ENCODE measurements at regions of chr12 and their contacts with region 1.

Region 1: DNA sequence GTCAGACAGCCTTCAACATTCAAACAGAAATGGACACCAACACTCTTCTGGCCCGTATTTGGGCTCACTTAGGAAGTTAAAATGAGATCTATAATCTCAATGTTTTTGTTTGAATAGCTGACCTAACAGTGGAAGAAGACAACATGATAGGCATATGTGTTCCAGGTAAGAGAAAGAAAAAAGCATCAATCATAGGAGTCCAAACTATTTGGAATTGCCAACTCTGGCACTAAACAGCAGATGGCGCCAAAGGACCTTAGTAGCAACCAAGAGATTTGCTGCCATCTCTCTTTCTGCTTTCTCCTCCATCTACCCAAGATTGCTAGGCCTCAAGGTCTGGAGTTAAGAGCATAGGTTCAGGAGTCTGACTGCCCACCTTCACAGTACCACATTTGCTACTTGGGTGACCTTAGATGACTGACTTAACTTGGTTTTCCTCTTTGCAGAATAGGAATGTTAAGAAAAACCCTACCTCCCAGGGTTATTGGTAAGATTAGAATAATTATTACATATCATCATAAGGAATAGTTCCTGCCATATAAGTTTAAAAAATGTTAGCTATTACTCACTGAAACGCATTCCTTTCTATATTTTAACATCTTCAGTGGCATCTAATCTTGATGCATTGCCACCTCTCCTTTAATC is 30.2 kb downstream of the PEX5 start:
- DNase-seq: peak; percentile 81
- ATAC-seq: no peak
- H3K4me3 Mint-ChIP-seq: no peak overlapping the region
- H3K27ac Mint-ChIP-seq: no peak overlapping the region
- H3K4me1 Mint-ChIP-seq: no peaks in the 10 kb centered on the region
- H3K27me3 Mint-ChIP-seq: no peaks in the 10 kb centered on the region

Region 2: GRCh38 chr12:7303230-7303629 is 83.5 kb after region 1 on chr12:
- CTCF ChIA-PET with region 1: no interaction called
- DNase-seq: no peak
- ATAC-seq: no peak
- H3K4me3 Mint-ChIP-seq: no peak overlapping the region
- H3K27ac Mint-ChIP-seq: no peak overlapping the region
- H3K4me1 Mint-ChIP-seq: no peaks in the 10 kb centered on the region
- H3K27me3 Mint-ChIP-seq: peaks cover 11% of the 10 kb centered on the region

Region 3: DNA sequence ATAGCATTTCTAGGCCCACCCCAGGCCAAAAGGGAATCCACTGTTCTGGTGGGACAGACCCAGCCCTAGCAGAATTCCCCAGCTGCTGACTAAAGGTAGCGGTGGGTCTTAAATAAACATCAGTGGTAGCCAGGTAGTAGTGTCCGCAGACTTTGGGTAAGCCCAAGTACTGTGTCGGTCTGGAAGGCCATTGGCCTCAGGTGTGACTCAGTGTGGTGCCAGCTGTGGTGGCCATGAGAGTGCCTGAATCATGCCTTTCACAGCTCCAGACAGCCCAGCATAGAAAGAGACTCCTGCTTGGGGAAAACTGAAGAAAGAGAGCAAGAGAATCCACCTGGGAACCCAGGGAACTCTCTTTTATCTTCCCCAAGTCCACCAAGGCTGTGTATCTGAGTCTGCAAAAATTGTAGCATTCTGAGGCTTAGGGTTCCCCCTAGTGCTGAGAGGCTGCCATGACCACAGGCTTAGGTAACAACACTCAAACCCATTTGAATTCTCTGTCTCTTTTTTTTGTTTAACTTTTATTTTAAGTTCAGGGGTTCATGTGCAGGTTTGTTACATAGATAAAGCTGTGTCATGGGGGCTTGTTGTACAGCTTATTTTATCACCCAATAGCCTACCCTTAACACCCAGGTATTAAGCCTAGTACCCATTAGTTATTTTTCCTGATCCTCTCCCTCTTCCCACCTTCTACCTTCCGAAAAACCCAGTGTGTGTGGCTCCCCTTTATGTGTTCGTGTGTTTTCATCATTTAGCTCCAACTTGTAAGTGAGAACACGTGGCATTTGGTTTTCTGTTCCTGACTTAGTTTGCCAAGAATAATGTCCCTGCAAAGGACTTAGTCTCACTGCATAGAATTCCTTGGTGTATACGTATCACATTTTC is 240.9 kb after region 1 on chr12:
- CTCF ChIA-PET with region 1: interaction called, 12 read pairs
- DNase-seq: peak; percentile 69
- ATAC-seq: peak; percentile 75
- H3K4me3 Mint-ChIP-seq: no peak overlapping the region
- H3K27ac Mint-ChIP-seq: no peak overlapping the region
- H3K4me1 Mint-ChIP-seq: no peaks in the 10 kb centered on the region
- H3K27me3 Mint-ChIP-seq: peaks cover 15% of the 10 kb centered on the region